Dendritic cell treated with granulocyte-macrophage colony-stimulating factor and Interleukin-4, amounts not matched to agents 40 ng/mL and 50 ng/mL, for 4 days (primary cell): ENCODE measurements at regions of chr12 and their contacts with region 1.

Region 1: DNA sequence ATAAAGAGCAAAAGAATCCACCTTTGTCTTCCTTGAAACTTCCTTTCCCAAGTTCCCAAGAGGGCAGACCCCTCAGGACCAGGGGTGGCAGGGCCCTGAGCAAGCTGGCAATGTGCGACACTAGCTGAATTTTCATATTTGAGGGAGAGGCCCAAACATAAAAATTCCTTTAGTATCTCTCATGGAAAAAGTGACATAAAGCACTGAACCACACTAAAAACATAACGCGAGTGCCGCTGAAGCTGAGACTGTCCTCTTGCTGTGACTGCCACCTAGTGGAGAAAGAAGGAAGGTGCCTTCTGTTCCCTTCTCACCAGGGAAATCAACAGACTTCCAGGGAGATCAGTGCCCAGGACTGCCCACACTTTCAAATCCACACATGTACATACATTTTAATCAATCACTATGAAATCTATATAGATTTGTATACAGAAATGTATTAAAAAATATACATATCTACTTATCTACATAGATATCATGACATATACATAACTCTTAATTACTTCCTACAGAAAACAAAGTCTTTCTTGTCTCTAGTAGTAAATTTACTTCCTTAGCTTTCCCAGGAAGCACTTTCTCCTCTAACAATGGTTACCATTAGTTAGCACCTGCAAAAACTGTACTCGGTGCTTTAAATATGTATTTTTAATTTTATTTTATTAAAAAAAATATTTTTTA is 53.8 kb downstream of the SSH1 start:
- H3K4me3 Mint-ChIP-seq: no peak overlapping the region
- H3K27ac Mint-ChIP-seq: no peak overlapping the region
- H3K4me1 Mint-ChIP-seq: no peaks in the 10 kb centered on the region
- H3K27me3 Mint-ChIP-seq: no peaks in the 10 kb centered on the region

Region 2: DNA sequence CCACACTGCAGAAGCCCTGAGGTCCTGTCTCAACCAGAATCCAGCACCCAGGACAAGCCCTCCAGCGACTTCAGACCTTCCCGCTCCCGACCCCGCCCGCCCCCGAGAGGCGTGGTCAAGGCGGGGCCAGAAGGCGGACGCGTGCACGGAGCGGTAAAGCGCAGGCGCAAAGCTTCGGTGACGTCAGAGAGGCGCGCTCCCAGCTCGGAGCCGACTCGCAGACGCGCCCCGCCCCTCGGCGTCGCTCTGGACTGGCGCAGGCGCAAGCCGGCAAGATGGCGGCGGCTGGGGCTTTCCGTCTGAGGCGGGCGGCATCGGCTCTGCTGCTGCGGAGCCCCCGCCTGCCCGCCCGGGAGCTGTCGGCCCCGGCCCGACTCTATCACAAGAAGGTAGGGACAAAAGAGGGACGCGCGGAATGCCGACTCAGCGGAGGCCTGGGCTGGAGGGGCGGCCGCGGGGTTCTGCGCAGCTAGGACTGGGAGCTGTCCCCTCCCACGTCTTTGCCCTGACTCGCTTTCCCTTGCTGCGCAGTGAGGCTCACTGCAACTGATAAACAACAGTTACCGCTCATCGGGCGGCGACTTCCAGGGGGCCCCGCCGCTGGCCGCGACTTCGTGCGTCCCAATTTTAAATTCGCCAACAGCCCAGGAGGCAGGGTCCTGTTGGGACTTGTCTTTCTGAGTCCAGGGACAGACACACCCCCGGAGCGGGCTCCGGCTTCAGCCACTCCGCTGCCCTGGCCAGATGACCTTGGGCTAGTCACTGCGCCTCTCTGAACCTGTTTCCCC is 241.0 kb before region 1 on chr12 and contains the start of gene ISCU:
- intact Hi-C with region 1: loop called (anchors 1 kb)
- H3K4me3 Mint-ChIP-seq: peak within 1 kb of the TSS; percentile 100
- H3K27ac Mint-ChIP-seq: peak within 1 kb of the TSS; percentile 94
- H3K4me1 Mint-ChIP-seq: peaks cover 59% of the 10 kb centered on the region
- H3K27me3 Mint-ChIP-seq: no peaks in the 10 kb centered on the region

Region 3: DNA sequence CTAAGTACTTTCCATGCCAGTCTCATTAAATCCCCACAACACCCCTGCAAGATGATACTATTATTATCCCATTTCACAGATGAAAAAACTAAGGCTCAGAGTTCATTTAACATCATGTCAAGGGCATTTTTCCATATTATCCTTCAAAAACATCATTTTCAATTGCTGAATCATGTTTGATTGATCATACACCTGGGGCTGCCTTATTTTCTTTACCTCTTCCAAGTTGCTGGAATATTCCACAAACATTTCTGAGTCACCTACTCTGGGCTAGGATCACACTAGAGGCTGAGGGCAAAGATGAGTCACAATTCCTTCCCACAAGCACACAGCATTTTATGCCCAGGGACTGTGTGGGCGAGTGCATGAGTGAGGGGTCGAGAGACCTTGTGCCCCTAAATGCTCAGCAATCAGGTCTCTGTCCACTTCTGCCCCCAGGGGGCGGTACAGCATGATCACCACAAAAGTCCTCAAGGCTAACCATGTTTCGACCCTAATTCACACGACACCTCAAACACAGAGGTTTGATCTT is 191.6 kb before region 1 on chr12:
- intact Hi-C with region 1: loop called (anchors 1 kb)
- H3K4me3 Mint-ChIP-seq: no peak overlapping the region
- H3K27ac Mint-ChIP-seq: no peak overlapping the region
- H3K4me1 Mint-ChIP-seq: peaks cover 34% of the 10 kb centered on the region
- H3K27me3 Mint-ChIP-seq: peaks cover 23% of the 10 kb centered on the region

Region 4: DNA sequence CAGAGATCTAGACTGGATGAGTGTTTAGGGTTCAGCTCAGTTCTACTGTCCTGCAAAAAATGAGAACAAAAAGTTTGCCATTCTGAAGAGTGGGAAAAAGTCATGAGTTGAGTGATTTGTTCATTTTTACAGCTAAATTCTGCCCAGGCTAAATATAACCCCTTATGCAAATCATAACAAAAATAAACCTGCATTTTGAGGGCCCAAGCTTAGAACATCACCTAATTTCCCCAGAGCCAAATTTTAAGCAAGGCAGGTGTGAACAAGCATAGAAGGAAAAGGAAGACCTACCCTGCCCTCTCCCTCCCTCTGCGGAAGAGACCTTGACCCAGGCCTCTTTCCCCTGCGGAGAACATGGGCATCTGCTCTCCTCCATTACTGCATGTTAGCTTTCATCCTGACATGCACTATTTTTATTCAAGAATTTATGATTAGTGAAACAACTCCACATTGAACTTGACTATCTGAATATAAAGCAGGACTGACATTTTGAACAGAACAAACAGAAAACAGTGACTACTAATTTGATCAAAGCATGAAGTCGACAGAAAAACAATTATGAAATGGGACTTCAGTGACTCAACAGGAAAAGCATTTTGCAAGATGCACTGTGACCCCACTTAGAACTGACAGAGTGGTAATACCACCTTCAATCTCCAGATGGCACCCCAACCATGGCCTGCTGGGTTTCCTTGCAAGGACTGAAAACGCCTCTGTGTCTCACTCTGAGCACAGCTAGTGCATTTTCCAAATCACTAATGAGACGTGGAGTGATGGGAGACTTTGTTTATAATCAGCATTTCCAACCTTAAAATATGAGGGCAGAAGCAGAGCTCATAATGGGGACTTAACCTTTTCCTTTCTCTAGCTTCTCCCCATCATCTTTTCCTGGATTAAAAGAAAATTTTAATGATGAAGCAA is 139.0 kb before region 1 on chr12:
- intact Hi-C with region 1: loop called (anchors 1 kb)
- H3K4me3 Mint-ChIP-seq: peak overlapping the region; percentile 23
- H3K27ac Mint-ChIP-seq: peak overlapping the region; percentile 82
- H3K4me1 Mint-ChIP-seq: peaks cover 51% of the 10 kb centered on the region
- H3K27me3 Mint-ChIP-seq: no peaks in the 10 kb centered on the region

Region 5: GRCh38 chr12:108744021-108744897 is 59.3 kb before region 1 on chr12:
- intact Hi-C with region 1: no loop called
- H3K4me3 Mint-ChIP-seq: no peak overlapping the region
- H3K27ac Mint-ChIP-seq: peak overlapping the region; percentile 77
- H3K4me1 Mint-ChIP-seq: peaks cover 34% of the 10 kb centered on the region
- H3K27me3 Mint-ChIP-seq: no peaks in the 10 kb centered on the region

Region 6: GRCh38 chr12:109773384-109774011 is 969.9 kb after region 1 on chr12:
- intact Hi-C with region 1: no loop called
- H3K4me3 Mint-ChIP-seq: no peak overlapping the region
- H3K27ac Mint-ChIP-seq: no peak overlapping the region
- H3K4me1 Mint-ChIP-seq: peaks cover 11% of the 10 kb centered on the region
- H3K27me3 Mint-ChIP-seq: peaks cover 20% of the 10 kb centered on the region